BJ (cell line): ENCODE measurements at regions of chr5 and their contacts with region 1.

Region 1: GRCh38 chr5:99191206-99191745 is 262.5 kb upstream of the CHD1 start:
- DNase-seq: no peak
- H3K4me3 ChIP-seq: no peak overlapping the region
- H3K27me3 ChIP-seq: no peaks in the 10 kb centered on the region
- CTCF ChIP-seq: no peak

Region 2: GRCh38 chr5:98898743-98899142 is 292.5 kb before region 1 on chr5:
- CTCF ChIA-PET with region 1: no interaction called
- POLR2A ChIA-PET with region 1: no interaction called
- DNase-seq: no peak
- H3K4me3 ChIP-seq: no peak overlapping the region
- H3K27me3 ChIP-seq: no peaks in the 10 kb centered on the region
- CTCF ChIP-seq: no peak

Region 3: GRCh38 chr5:99169309-99169708 is 22.0 kb before region 1 on chr5:
- CTCF ChIA-PET with region 1: no interaction called
- POLR2A ChIA-PET with region 1: interaction called, 11 read pairs
- DNase-seq: no peak
- H3K4me3 ChIP-seq: no peak overlapping the region
- H3K27me3 ChIP-seq: no peaks in the 10 kb centered on the region
- CTCF ChIP-seq: 0 out of 2 replicates have a peak, but pooled peaks have one; percentile 17